Stomach (tissue), 19 donors: ENCODE measurements at regions of chr1 and their contacts with region 1.

Region 1: DNA sequence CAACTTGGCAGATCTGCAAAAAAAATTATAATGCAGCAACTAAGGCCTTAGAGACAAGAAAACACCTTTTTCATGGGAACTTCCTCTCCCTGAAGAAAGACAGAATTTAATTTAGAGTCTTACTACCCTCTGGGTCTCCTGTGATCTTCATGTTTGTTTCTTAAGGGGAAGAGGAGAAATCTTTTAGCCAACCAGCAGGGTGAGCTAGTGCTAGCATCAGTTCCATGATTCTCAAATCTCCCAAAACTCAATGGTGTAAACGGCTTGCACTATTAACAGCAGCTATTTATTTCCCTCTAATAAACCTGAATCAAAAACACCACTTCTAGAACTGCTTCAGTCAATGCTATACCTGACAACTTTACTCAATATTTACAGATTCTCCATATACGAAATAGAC is 3.8 kb downstream of the ZNF644 start:
- DNase-seq: peak in 1 of 2 donors; percentile 48
- H3K4me3 ChIP-seq: no peak overlapping the region
- H3K27ac ChIP-seq: no peak overlapping the region
- H3K4me1 ChIP-seq: peaks cover 30 to 85% (median 59%) of the 10 kb centered on the region in 4 donors
- H3K27me3 ChIP-seq: no peaks in the 10 kb centered on the region
- CTCF ChIP-seq: peak in 1 of 7 experiments; percentile 11
- EP300 ChIP-seq: no peak
- POLR2A ChIP-seq: no peak

Region 2: DNA sequence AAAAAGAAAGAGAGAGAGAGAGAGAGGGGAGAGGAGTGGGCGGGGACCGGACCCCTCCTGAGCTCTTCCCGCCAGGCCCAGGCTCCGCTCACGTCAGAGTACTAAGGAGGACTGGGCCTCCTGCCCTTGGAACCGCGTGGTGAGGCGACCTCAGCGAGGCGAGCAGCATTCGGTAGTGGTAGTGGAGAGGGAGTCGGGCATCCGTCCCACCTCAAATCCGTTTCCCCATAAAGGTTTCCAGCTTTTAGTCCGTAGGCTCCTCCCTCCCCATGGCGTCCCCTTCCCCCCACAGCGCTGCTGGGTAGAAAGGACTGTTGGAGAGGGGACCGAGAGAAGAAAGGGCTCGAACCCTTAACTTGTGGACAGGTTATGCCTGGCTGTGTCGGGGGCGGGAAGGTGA is 176.5 kb before region 1 on chr1:
- intact Hi-C with region 1: loop called (anchors 10 kb)
- DNase-seq: peak in 1 of 2 donors; percentile 22
- H3K4me3 ChIP-seq: no peak overlapping the region
- H3K27ac ChIP-seq: no peak overlapping the region
- H3K4me1 ChIP-seq: peaks cover 0 to 12% (median 10%) of the 10 kb centered on the region in 4 donors
- H3K27me3 ChIP-seq: peaks cover 10 to 77% (median 35%) of the 10 kb centered on the region in 3 donors
- CTCF ChIP-seq: no peak
- EP300 ChIP-seq: no peak
- POLR2A ChIP-seq: no peak